ENCODE measurements at regions of chr7 and their contacts with region 1.

Region 1: DNA sequence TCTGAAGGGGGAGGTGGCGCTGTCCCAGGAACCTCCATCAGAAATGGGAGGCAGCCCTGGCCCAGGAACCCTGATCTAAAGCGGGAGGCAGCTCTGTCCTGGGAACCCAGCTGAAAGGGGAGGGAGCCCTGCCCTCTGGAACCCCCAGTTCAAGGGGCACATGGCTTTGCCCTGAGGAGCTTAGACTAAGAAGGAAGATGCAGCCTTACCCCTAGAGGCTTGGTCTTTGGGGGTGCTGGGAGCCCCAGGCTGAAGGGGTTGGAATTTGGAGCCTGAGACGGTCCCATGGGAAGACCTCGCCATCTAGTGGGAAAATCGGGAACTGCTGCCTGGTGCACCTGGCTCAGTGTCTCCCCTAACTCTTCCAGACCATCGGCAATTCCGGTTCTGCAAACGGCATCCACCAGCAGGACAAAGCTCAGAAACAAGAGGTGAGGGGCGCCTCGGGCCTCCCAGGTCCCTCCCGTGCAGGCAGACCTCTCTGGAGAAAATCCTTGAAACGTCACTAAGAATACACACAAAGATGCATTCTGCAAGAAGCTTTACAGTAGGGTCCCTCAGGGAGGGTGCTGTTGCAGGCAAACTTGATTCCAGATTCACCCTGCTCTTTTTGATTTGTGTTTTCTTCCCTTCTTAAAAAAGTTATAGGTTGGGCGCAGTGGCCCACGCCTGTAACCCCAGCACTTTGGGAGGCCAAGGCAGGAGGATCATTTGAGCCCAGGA is 52.4 kb upstream of the GTF2IRD1 start:
- DNase-seq: peak; percentile 82 to 97
- H3K4me3 ChIP-seq: no peak overlapping the region
- H3K27ac ChIP-seq: no peak overlapping the region
- H3K4me1 ChIP-seq: peaks cover 0 to 5% (median under 1%) of the 10 kb centered on the region in 4 experiments; a peak in 3 of 7 replicates
- H3K27me3 ChIP-seq: no peaks in the 10 kb centered on the region
- CTCF ChIP-seq: peak; percentile 92 to 98 (median 97)
- EP300 ChIP-seq: no peak
- POLR2A ChIP-seq: no peak
- RAD21 ChIP-seq: peak; percentile 94

Region 2: GRCh38 chr7:74026903-74027551 is 374.3 kb before region 1 on chr7:
- CTCF ChIA-PET with region 1: interaction called, 10 read pairs
- POLR2A ChIA-PET with region 1: no interaction called
- DNase-seq: peak; percentile 31 to 97
- H3K4me3 ChIP-seq: no peak overlapping the region
- H3K27ac ChIP-seq: no peak overlapping the region
- H3K4me1 ChIP-seq: peaks cover 0 to 24% (median 17%) of the 10 kb centered on the region in 4 experiments; a peak in 6 of 7 replicates
- H3K27me3 ChIP-seq: peaks cover 0 to 9% (median 4%) of the 10 kb centered on the region in 4 experiments; a peak in 3 of 7 replicates
- CTCF ChIP-seq: peak in 2 of 3 experiments; percentile 89 to 92; a peak in 3 of 4 replicates
- EP300 ChIP-seq: no peak
- POLR2A ChIP-seq: no peak
- RAD21 ChIP-seq: peak; percentile 72 to 84

Region 3: GRCh38 chr7:74231232-74231590 is 170.1 kb before region 1 on chr7:
- CTCF ChIA-PET with region 1: interaction called, 13 read pairs
- POLR2A ChIA-PET with region 1: interaction called, 3 read pairs
- DNase-seq: no peak
- H3K4me3 ChIP-seq: no peak overlapping the region
- H3K27ac ChIP-seq: no peak overlapping the region
- H3K4me1 ChIP-seq: no peaks in the 10 kb centered on the region
- H3K27me3 ChIP-seq: no peaks in the 10 kb centered on the region
- CTCF ChIP-seq: no peak
- EP300 ChIP-seq: no peak
- POLR2A ChIP-seq: no peak
- RAD21 ChIP-seq: no peak

Region 4: GRCh38 chr7:74262639-74263398 is 138.5 kb before region 1 on chr7:
- CTCF ChIA-PET with region 1: interaction called, 25 read pairs
- POLR2A ChIA-PET with region 1: no interaction called
- DNase-seq: no peak
- H3K4me3 ChIP-seq: no peak overlapping the region
- H3K27ac ChIP-seq: no peak overlapping the region
- H3K4me1 ChIP-seq: no peaks in the 10 kb centered on the region
- H3K27me3 ChIP-seq: no peaks in the 10 kb centered on the region
- CTCF ChIP-seq: no peak
- EP300 ChIP-seq: no peak
- POLR2A ChIP-seq: no peak
- RAD21 ChIP-seq: no peak

Region 5: GRCh38 chr7:74306730-74307469 is 94.4 kb before region 1 on chr7:
- CTCF ChIA-PET with region 1: interaction called, 10 read pairs
- POLR2A ChIA-PET with region 1: no interaction called
- DNase-seq: no peak
- H3K4me3 ChIP-seq: no peak overlapping the region
- H3K27ac ChIP-seq: no peak overlapping the region
- H3K4me1 ChIP-seq: no peaks in the 10 kb centered on the region; a peak in 3 of 7 replicates
- H3K27me3 ChIP-seq: no peaks in the 10 kb centered on the region
- CTCF ChIP-seq: no peak
- EP300 ChIP-seq: no peak
- POLR2A ChIP-seq: no peak
- RAD21 ChIP-seq: no peak

Region 6: GRCh38 chr7:74412056-74412455 is 10.8 kb after region 1 on chr7:
- CTCF ChIA-PET with region 1: interaction called, 44 read pairs
- POLR2A ChIA-PET with region 1: interaction called, 8 read pairs
- DNase-seq: no peak
- H3K4me3 ChIP-seq: no peak overlapping the region
- H3K27ac ChIP-seq: no peak overlapping the region
- H3K4me1 ChIP-seq: no peaks in the 10 kb centered on the region
- H3K27me3 ChIP-seq: no peaks in the 10 kb centered on the region
- CTCF ChIP-seq: no peak
- EP300 ChIP-seq: no peak
- POLR2A ChIP-seq: no peak
- RAD21 ChIP-seq: no peak

Region 7: DNA sequence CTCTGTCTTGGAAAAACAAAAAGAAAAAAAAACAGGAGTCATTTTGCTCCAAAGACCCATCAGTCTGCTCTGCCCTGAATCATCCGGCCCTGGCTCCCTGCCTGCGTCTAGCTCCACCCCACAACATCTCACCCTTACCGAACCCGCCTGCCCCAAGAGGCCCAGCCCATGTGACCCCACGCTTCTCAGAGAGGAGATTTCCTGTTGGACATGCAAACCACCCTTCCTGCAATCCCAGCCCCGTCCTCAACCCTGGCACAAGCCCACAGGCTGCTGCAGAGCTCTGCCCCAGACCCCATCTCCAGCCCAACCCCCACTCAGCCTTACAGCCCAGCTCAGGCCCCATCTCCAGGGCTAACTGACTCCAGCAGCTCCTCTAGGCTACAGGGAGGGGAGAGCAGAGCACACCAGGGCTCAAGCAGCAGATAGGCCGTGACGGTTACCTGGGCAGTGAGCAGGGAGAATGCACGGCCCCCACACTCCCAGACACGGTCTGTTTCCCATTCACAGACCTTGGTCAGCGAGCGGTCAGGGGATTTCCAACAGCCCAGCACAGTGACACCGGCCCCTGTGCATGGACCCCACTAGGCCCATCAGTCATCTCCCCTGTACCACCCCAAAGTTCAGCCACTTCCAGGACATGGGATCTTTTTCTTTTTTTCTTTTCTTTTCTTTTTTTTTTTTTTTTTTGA is 186.3 kb after region 1 on chr7:
- CTCF ChIA-PET with region 1: interaction called, 11 read pairs
- POLR2A ChIA-PET with region 1: no interaction called
- DNase-seq: peak in 1 of 2 experiments; percentile 69
- H3K4me3 ChIP-seq: no peak overlapping the region
- H3K27ac ChIP-seq: 0 out of 2 replicates have a peak overlapping the region, but pooled peaks have one; percentile 32
- H3K4me1 ChIP-seq: peaks cover 4 to 10% (median 8%) of the 10 kb centered on the region in 4 experiments; a peak in 6 of 7 replicates
- H3K27me3 ChIP-seq: no peaks in the 10 kb centered on the region
- CTCF ChIP-seq: no peak
- EP300 ChIP-seq: no peak
- POLR2A ChIP-seq: peak in 1 of 2 experiments; percentile 35; a peak in 1 of 3 replicates
- RAD21 ChIP-seq: peak in 1 of 2 experiments; percentile 16; a peak in 2 of 4 replicates

Region 8: GRCh38 chr7:74623135-74623534 is 221.8 kb after region 1 on chr7:
- CTCF ChIA-PET with region 1: no interaction called
- POLR2A ChIA-PET with region 1: no interaction called
- DNase-seq: no peak
- H3K4me3 ChIP-seq: no peak overlapping the region
- H3K27ac ChIP-seq: no peak overlapping the region
- H3K4me1 ChIP-seq: peaks cover 0 to 10% (median 2%) of the 10 kb centered on the region in 4 experiments; a peak in 4 of 7 replicates
- H3K27me3 ChIP-seq: no peaks in the 10 kb centered on the region
- CTCF ChIP-seq: no peak
- EP300 ChIP-seq: no peak
- POLR2A ChIP-seq: no peak
- RAD21 ChIP-seq: no peak

Region 9: GRCh38 chr7:74665296-74665938 is 264.1 kb after region 1 on chr7:
- CTCF ChIA-PET with region 1: no interaction called
- POLR2A ChIA-PET with region 1: no interaction called
- DNase-seq: no peak
- H3K4me3 ChIP-seq: no peak overlapping the region
- H3K27ac ChIP-seq: no peak overlapping the region
- H3K4me1 ChIP-seq: peaks cover 3 to 21% (median 13%) of the 10 kb centered on the region in 4 experiments
- H3K27me3 ChIP-seq: no peaks in the 10 kb centered on the region
- CTCF ChIP-seq: no peak
- EP300 ChIP-seq: no peak
- POLR2A ChIP-seq: no peak
- RAD21 ChIP-seq: no peak

Measured in H1 (cell line).